ENCODE measurements at regions of chr11 and their contacts with region 1.

Region 1: GRCh38 chr11:27485930-27486773 is 13.6 kb upstream of the LGR4 start:
- DNase-seq: peak; percentile 84
- H3K4me3 Mint-ChIP-seq: no peak overlapping the region
- H3K27ac Mint-ChIP-seq: no peak overlapping the region
- H3K4me1 Mint-ChIP-seq: no peaks in the 10 kb centered on the region
- H3K27me3 Mint-ChIP-seq: no peaks in the 10 kb centered on the region

Region 2: DNA sequence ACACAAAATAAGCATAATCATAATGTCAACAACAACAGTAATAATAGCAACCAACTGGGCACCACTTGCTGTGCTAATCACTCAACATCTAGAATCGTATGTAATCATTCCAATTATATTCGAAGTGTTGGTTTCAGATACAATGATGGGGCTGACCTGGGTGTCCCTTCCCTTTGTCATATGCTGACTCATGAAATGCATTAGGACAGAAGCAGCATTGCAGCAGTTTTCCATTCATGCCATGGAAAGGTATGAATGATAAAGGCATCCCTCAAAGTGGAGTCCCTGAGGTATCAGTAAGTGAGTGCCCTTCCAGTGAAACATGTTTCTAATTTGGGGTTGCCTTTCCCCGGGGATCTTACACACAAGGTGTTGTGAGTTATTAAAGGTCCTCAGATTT is 1200.5 kb before region 1 on chr11:
- intact Hi-C with region 1: loop called (anchors 1 kb)
- DNase-seq: no peak
- H3K4me3 Mint-ChIP-seq: no peak overlapping the region
- H3K27ac Mint-ChIP-seq: no peak overlapping the region
- H3K4me1 Mint-ChIP-seq: peaks cover 4% of the 10 kb centered on the region
- H3K27me3 Mint-ChIP-seq: peaks cover 1% of the 10 kb centered on the region

Region 3: GRCh38 chr11:26753723-26754504 is 732.2 kb before region 1 on chr11:
- intact Hi-C with region 1: loop called (anchors 5 kb)
- DNase-seq: no peak
- H3K4me3 Mint-ChIP-seq: no peak overlapping the region
- H3K27ac Mint-ChIP-seq: no peak overlapping the region
- H3K4me1 Mint-ChIP-seq: no peaks in the 10 kb centered on the region
- H3K27me3 Mint-ChIP-seq: no peaks in the 10 kb centered on the region

Region 4: GRCh38 chr11:27183672-27184457 is 302.3 kb before region 1 on chr11:
- intact Hi-C with region 1: loop called (anchors 1 kb)
- DNase-seq: peak; percentile 70
- H3K4me3 Mint-ChIP-seq: no peak overlapping the region
- H3K27ac Mint-ChIP-seq: no peak overlapping the region
- H3K4me1 Mint-ChIP-seq: no peaks in the 10 kb centered on the region
- H3K27me3 Mint-ChIP-seq: peaks cover 10% of the 10 kb centered on the region

Region 5: GRCh38 chr11:27443746-27444507 is 42.2 kb before region 1 on chr11:
- intact Hi-C with region 1: no loop called
- DNase-seq: no peak
- H3K4me3 Mint-ChIP-seq: no peak overlapping the region
- H3K27ac Mint-ChIP-seq: no peak overlapping the region
- H3K4me1 Mint-ChIP-seq: no peaks in the 10 kb centered on the region
- H3K27me3 Mint-ChIP-seq: peaks cover 1% of the 10 kb centered on the region